BJ (cell line): ENCODE measurements at regions of chr2 and their contacts with region 1.

Region 1: DNA sequence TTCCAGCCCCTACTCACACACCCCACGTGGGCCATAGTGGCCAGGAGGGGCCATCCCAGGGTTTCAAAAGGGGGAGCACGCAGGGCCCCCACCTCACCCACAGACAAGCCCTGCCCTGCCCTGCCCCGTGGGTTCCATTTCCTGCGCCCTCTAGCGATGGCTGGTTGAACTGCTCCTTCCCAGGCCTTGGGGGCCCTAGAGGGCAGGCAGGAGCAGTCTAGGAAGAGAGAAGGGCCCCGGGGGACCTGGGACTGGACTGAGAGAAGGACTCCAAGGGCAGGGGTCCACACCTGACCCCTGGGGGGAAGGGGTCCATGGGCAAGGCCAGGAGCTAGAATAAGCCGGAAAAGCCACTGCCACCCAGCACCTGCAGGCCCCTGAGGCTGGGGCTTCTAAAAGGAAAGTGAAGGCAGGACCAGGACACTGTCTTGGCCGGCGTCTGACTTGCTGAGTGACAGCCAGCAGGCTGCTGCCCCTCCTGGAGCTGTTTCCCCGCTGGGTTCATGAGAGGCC is 10.1 kb downstream of the CYP26B1 start:
- DNase-seq: no peak
- H3K4me3 ChIP-seq: no peak overlapping the region
- H3K27me3 ChIP-seq: peaks cover 6% of the 10 kb centered on the region
- CTCF ChIP-seq: peak; percentile 96

Region 2: GRCh38 chr2:72118951-72119350 is 18.6 kb before region 1 on chr2:
- CTCF ChIA-PET with region 1: interaction called, 7 read pairs
- POLR2A ChIA-PET with region 1: interaction called, 10 read pairs
- DNase-seq: no peak
- H3K4me3 ChIP-seq: no peak overlapping the region
- H3K27me3 ChIP-seq: peaks cover 3% of the 10 kb centered on the region
- CTCF ChIP-seq: no peak

Region 3: DNA sequence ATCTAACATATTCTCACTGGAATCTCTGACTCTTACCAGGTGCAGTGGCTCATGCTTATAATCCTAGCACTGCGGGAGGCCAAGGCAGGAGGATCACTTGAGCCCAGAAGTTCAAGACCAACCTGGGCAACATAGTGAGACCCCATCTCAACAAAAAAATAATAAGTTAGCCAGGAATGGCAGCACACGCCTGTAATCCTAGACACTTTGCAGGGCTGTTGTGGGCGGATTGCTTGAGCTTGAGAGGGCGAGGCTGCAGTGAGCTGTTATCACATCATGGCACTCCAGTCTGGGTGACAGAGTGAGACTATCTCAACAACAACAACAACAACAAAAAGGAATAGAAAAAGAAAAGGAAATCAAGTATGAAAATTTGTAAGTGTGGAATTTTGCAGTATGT is 316.6 kb after region 1 on chr2:
- CTCF ChIA-PET with region 1: no interaction called
- POLR2A ChIA-PET with region 1: no interaction called
- DNase-seq: no peak
- H3K4me3 ChIP-seq: no peak overlapping the region
- H3K27me3 ChIP-seq: no peaks in the 10 kb centered on the region
- CTCF ChIP-seq: no peak